AG04449 (cell line): ENCODE measurements at regions of chr15 and their contacts with region 1.

Region 1: GRCh38 chr15:89057504-89058133 is 30.6 kb upstream of the ABHD2 start:
- DNase-seq: no peak
- H3K4me3 ChIP-seq: no peak overlapping the region
- CTCF ChIP-seq: peak; percentile 98

Region 2: GRCh38 chr15:88872106-88872505 is 185.5 kb before region 1 on chr15:
- CTCF ChIA-PET with region 1: no interaction called
- POLR2A ChIA-PET with region 1: no interaction called
- DNase-seq: no peak
- H3K4me3 ChIP-seq: no peak overlapping the region
- CTCF ChIP-seq: no peak

Region 3: GRCh38 chr15:88949734-88950400 is 107.8 kb before region 1 on chr15:
- CTCF ChIA-PET with region 1: no interaction called
- POLR2A ChIA-PET with region 1: no interaction called
- DNase-seq: no peak
- H3K4me3 ChIP-seq: no peak overlapping the region
- CTCF ChIP-seq: no peak

Region 4: DNA sequence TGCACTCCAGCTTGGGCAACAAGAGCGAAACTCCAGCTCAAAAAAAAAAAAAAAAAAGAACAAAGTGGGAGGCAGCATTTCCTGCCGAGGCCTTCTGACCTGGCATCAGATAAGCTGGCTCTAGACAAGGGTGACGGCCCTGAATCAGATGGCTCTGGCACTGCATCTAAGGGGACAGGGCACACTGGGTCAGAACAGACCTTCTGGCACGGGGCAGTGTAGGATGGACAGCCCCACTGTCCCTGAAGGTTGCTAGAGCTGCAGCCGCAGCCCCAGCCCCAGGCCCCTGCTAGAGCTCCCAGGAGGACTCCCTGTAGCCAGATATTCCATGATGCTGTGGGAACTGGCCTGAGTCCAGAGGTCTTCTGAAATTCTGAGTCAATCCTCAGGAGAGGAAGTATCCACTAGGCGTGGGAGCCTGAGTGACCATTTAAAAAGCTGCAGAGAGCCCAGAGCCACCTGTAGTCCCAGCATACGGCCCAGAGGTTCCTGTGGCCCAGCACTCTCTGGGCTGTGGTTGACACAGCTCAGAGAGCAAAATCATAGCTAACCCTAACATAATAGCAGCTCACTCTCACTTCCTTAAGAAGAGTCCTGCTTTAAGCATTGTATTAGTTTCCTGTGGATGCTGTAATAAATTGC is 75.2 kb before region 1 on chr15:
- CTCF ChIA-PET with region 1: no interaction called
- POLR2A ChIA-PET with region 1: no interaction called
- DNase-seq: no peak
- H3K4me3 ChIP-seq: no peak overlapping the region
- CTCF ChIP-seq: no peak

Region 5: DNA sequence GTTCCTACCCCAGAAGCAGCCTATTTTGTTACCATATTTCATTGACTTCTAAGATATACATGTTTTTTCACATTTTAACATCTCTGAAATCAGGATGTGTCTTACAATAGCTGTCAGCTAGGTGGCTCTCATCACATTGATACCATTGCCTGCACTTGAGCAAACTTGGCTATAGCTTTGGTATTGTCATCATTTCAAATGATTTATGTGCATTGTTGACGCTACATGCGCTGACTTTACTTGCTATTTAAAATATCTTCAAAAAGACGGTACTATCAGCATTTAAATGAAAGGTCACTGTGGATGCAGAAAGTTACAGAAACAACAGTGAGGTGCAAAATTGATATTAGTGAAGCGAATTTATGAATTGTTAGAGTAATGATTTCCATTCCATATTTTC is 23.3 kb before region 1 on chr15:
- CTCF ChIA-PET with region 1: interaction called, 10 read pairs
- POLR2A ChIA-PET with region 1: no interaction called
- DNase-seq: no peak
- H3K4me3 ChIP-seq: no peak overlapping the region
- CTCF ChIP-seq: peak; percentile 43

Region 6: DNA sequence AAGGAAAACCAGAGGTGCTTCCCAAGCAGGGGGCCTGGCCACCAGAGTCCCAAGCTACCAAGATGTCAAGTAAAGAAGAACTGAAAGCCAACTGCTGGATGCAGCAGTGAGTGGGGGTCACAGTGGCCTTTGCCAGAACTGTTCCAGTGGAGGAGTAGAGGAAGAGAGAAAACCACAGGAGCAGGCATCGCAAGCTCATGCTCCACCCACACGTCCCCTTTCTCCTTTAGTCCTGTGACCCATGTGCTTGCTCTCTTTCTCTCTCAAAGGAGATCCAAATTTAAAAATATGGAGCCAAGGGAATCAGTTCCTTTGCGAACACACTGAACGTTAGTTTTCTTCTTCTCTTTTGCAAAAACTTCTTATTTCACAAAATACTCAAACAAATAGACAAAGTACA is 18.2 kb after region 1 on chr15:
- CTCF ChIA-PET with region 1: interaction called, 33 read pairs
- POLR2A ChIA-PET with region 1: no interaction called
- DNase-seq: no peak
- H3K4me3 ChIP-seq: no peak overlapping the region
- CTCF ChIP-seq: no peak

Region 7: GRCh38 chr15:89112341-89112971 is 54.8 kb after region 1 on chr15:
- CTCF ChIA-PET with region 1: interaction called, 18 read pairs
- POLR2A ChIA-PET with region 1: no interaction called
- DNase-seq: no peak
- H3K4me3 ChIP-seq: no peak overlapping the region
- CTCF ChIP-seq: no peak

Region 8: GRCh38 chr15:89143503-89144162 is 86.0 kb after region 1 on chr15:
- CTCF ChIA-PET with region 1: interaction called, 40 read pairs
- POLR2A ChIA-PET with region 1: no interaction called
- DNase-seq: no peak
- H3K4me3 ChIP-seq: no peak overlapping the region
- CTCF ChIP-seq: no peak

Region 9: GRCh38 chr15:89197503-89197971 is 139.9 kb after region 1 on chr15:
- CTCF ChIA-PET with region 1: interaction called, 10 read pairs
- POLR2A ChIA-PET with region 1: no interaction called
- DNase-seq: no peak
- H3K4me3 ChIP-seq: no peak overlapping the region
- CTCF ChIP-seq: no peak